Activated CD4-positive, alpha-beta memory T cell treated with anti-CD3 and anti-CD28 coated beads for 36 hours (primary cell): ENCODE measurements at regions of chr1 and their contacts with region 1.

Region 1: GRCh38 chr1:154760469-154760933 is 109.6 kb downstream of the KCNN3 start:
- DNase-seq: peak; percentile 86
- H3K4me3 Mint-ChIP-seq: peak overlapping the region; percentile 51
- H3K27ac Mint-ChIP-seq: peak overlapping the region; percentile 89
- H3K4me1 Mint-ChIP-seq: peaks cover 46% of the 10 kb centered on the region
- H3K27me3 Mint-ChIP-seq: peaks cover 2% of the 10 kb centered on the region

Region 2: DNA sequence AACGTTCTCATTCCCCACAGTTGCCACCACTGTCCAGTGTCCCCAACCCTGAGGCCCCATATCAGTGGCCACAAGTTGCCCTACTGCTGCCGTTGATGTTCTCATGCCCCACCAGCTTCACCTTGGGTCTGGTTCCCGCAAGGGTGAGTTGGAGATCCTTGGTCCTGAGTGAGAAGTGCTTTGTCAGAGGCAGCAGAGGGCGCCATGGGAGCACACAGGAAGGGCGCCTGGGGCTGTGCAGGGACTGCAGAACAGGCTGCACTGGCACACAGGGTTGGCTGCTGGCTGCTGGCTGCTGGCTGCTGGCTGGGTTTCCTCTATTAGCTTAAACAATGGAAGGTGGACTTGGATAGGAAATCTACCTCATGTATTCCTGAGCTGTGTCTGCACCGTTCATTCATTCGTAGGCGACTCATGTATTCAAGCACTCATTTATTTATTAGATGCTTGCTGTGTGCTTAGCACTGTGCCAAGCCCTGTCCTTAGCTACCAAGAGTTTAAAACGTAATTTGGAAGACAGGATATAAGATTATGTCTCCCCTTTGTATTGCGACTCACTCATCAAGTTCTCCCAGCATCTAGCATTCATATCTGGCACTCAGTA is 1404.9 kb before region 1 on chr1:
- CTCF ChIA-PET with region 1: no interaction called
- POLR2A ChIA-PET with region 1: no interaction called
- intact Hi-C with region 1: no loop called
- DNase-seq: peak; percentile 61
- H3K4me3 Mint-ChIP-seq: no peak overlapping the region
- H3K27ac Mint-ChIP-seq: no peak overlapping the region
- H3K4me1 Mint-ChIP-seq: peaks cover 13% of the 10 kb centered on the region
- H3K27me3 Mint-ChIP-seq: peaks cover 2% of the 10 kb centered on the region

Region 3: DNA sequence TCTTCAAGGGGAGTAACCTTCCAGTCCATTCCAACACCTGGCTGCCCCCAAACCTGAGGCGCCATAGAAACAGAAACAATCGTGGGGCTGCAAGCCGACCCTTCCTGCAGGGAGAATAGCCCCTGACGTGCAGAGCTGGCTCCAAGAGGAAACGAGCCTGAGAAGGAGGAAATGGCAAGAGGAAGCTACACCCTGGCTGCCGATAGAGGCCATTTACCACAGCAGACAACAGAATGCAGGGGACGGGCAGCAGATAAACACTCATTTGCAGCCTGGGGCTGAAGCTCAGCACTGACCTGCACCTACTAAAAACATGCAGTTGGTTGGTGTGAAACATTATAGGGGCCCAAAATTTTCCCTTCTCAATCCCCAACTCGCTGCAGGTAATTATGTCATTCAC is 267.2 kb before region 1 on chr1:
- CTCF ChIA-PET with region 1: no interaction called
- POLR2A ChIA-PET with region 1: no interaction called
- intact Hi-C with region 1: loop called (anchors 5 kb)
- DNase-seq: peak; percentile 24
- H3K4me3 Mint-ChIP-seq: no peak overlapping the region
- H3K27ac Mint-ChIP-seq: no peak overlapping the region
- H3K4me1 Mint-ChIP-seq: peaks cover 44% of the 10 kb centered on the region
- H3K27me3 Mint-ChIP-seq: no peaks in the 10 kb centered on the region

Region 4: GRCh38 chr1:154716011-154716410 is 44.5 kb before region 1 on chr1:
- CTCF ChIA-PET with region 1: no interaction called
- POLR2A ChIA-PET with region 1: no interaction called
- intact Hi-C with region 1: no loop called
- DNase-seq: no peak
- H3K4me3 Mint-ChIP-seq: no peak overlapping the region
- H3K27ac Mint-ChIP-seq: no peak overlapping the region
- H3K4me1 Mint-ChIP-seq: peaks cover 15% of the 10 kb centered on the region
- H3K27me3 Mint-ChIP-seq: no peaks in the 10 kb centered on the region

Region 5: GRCh38 chr1:154730259-154730658 is 30.2 kb before region 1 on chr1:
- CTCF ChIA-PET with region 1: no interaction called
- POLR2A ChIA-PET with region 1: no interaction called
- intact Hi-C with region 1: loop called (anchors 2 kb)
- DNase-seq: no peak
- H3K4me3 Mint-ChIP-seq: no peak overlapping the region
- H3K27ac Mint-ChIP-seq: no peak overlapping the region
- H3K4me1 Mint-ChIP-seq: peaks cover 41% of the 10 kb centered on the region
- H3K27me3 Mint-ChIP-seq: peaks cover 16% of the 10 kb centered on the region

Region 6: GRCh38 chr1:154747740-154748404 is 12.6 kb before region 1 on chr1:
- CTCF ChIA-PET with region 1: interaction called, 31 read pairs
- POLR2A ChIA-PET with region 1: interaction called, 6 read pairs
- intact Hi-C with region 1: loop called (anchors 1 kb)
- DNase-seq: peak; percentile 78
- H3K4me3 Mint-ChIP-seq: peak overlapping the region; percentile 58
- H3K27ac Mint-ChIP-seq: peak overlapping the region; percentile 83
- H3K4me1 Mint-ChIP-seq: peaks cover 68% of the 10 kb centered on the region
- H3K27me3 Mint-ChIP-seq: no peaks in the 10 kb centered on the region

Region 7: GRCh38 chr1:154791292-154792166 is 31.0 kb after region 1 on chr1:
- CTCF ChIA-PET with region 1: interaction called, 9 read pairs
- POLR2A ChIA-PET with region 1: interaction called, 6 read pairs
- intact Hi-C with region 1: loop called (anchors 1 kb)
- DNase-seq: peak; percentile 89
- H3K4me3 Mint-ChIP-seq: peak overlapping the region; percentile 50
- H3K27ac Mint-ChIP-seq: peak overlapping the region; percentile 88
- H3K4me1 Mint-ChIP-seq: peaks cover 30% of the 10 kb centered on the region
- H3K27me3 Mint-ChIP-seq: peaks cover 3% of the 10 kb centered on the region